ENCODE measurements at regions of chr2 and their contacts with region 1.

Region 1: GRCh38 chr2:86368161-86368824 is 30.9 kb upstream of the REEP1 start:
- DNase-seq: peak; percentile 65
- H3K4me3 ChIP-seq: no peak overlapping the region
- H3K27ac ChIP-seq: no peak overlapping the region
- H3K4me1 ChIP-seq: no peaks in the 10 kb centered on the region
- CTCF ChIP-seq: peak; percentile 80

Region 2: DNA sequence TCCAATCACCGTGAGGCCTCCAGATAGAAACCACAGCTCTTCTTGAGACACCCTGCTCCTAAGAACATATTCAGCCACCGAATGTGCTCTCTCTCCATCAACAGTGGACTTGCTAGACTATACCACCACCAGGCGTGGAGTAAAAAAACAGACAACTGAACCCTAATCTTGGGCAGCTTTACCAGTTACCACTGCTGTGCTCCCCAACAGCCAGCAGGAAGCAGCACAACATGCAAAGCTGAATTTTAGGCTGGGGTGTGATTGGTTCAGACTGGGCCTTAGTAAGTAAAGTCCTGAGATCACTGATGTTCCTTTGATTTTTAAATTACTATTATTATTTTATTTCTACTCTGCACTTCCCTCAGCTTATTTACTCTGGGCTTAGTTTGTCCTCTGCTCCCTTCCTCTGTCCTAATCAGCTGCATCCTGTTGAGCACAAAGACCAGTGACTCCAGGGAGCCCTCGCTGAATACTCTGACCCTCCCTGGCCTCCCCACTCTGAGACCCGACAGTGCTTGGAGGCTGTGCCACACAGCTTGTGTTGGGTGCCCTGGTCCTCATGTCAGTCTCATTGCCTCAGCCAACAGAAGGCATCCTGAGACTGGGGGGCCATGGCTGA is 147.1 kb before region 1 on chr2:
- CTCF ChIA-PET with region 1: interaction called, 3 read pairs
- POLR2A ChIA-PET with region 1: interaction called, 3 read pairs
- intact Hi-C with region 1: loop called (anchors 2 kb)
- DNase-seq: peak; percentile 72
- H3K4me3 ChIP-seq: no peak overlapping the region
- H3K27ac ChIP-seq: no peak overlapping the region
- H3K4me1 ChIP-seq: peaks cover 24% of the 10 kb centered on the region
- CTCF ChIP-seq: peak; percentile 89

Region 3: DNA sequence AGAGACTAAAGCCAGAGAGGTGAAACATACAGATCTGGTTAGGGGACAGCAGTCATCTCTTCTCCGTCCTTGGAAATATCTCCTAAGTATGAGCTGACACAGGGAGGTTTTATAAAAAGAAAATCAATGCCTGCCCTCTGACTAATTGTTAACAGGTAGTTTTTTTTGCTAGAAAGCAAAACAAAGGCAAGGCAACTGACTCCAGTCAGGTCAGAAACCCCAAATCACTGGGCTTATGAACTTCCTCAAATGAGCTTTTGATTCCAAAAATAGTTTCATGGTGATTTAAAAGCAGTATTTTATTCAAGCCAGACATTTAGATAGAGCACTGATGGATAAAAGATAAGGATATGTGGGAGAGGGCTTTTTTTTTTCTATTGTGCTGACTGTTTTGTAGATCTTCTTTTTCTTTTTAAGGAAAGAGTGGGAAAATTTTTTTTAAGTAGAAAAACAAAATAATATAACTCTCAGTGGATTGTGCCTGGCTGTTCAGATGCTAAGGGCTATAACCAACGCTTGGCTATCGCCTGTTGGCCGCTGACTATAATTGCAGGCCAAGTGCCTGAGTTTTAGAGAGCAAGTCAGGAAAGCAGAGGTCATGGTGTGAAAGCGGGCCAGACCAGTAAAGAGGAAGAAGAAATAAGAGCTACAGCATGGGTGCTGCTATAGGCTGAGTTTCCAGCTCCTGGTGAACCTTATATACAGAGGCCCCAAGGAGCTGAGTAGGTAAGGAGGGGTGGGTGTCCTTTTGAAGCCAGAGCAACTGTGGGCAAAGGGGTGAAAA is 124.2 kb before region 1 on chr2:
- CTCF ChIA-PET with region 1: no interaction called
- POLR2A ChIA-PET with region 1: no interaction called
- intact Hi-C with region 1: loop called (anchors 5 kb)
- DNase-seq: peak; percentile 62
- H3K4me3 ChIP-seq: no peak overlapping the region
- H3K27ac ChIP-seq: no peak overlapping the region
- H3K4me1 ChIP-seq: peaks cover 43% of the 10 kb centered on the region
- CTCF ChIP-seq: peak; percentile 41; the same call in 1 of the 2 replicates

Measured in OCI-LY7 (cell line).